ENCODE measurements at regions of chr3 and their contacts with region 1.

Region 1: GRCh38 chr3:105868742-105869530 is at the start of gene CBLB:
- DNase-seq: peak; percentile 96 to 97
- H3K4me3 ChIP-seq: peak within 1 kb of the TSS; percentile 80 to 88
- H3K27ac ChIP-seq: peak within 1 kb of the TSS; percentile 95 to 96
- H3K4me1 ChIP-seq: peaks cover 0 to 45% (median 20%) of the 10 kb centered on the region in 4 donors
- H3K27me3 ChIP-seq: no peaks in the 10 kb centered on the region
- CTCF ChIP-seq: peak in 1 of 2 experiments; percentile 31

Region 2: DNA sequence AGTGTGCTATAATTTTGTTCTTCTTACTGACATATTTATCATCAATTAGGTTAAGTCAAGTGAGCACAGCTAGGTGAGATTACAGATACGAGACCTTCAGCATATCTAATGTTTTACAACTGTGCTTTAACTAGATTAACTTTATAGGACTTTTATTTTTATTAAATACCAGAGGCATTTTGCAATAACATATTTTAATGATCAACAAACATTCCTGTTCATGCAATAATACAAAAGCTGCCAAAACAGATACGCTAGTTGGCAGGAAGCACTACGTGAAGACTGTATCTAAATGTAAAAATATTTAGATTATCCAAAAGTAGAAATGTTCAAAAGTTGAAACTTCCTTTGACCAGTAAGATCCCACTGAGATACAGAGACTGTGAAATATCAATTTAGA is 139.3 kb before region 1 on chr3:
- intact Hi-C with region 1: loop called (anchors 10 kb)
- DNase-seq: no peak
- H3K4me3 ChIP-seq: no peak overlapping the region
- H3K27ac ChIP-seq: no peak overlapping the region
- H3K4me1 ChIP-seq: peaks cover 0 to 30% (median 13%) of the 10 kb centered on the region in 4 donors
- H3K27me3 ChIP-seq: no peaks in the 10 kb centered on the region
- CTCF ChIP-seq: no peak

Region 3: DNA sequence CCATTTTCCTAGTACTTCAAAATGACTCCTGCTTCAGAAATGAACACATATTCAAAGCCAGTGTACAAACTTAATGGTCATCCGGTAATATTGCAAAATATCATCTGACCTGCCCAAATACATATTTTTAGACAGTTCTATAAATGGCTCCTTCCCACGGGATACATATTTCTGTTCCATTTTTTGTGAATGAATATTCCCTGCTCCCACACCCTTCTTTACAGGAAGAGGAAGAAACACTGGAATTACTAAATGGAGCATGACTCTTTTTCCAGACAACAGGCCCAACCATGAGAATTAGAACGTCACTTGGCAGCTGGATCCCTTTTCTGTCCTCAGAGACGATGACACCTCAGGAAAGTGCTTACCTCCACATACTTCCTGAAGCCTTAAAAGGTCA is 37.9 kb after region 1 on chr3:
- intact Hi-C with region 1: loop called (anchors 5 kb)
- DNase-seq: peak in 1 of 2 donors; percentile 72
- H3K4me3 ChIP-seq: no peak overlapping the region
- H3K27ac ChIP-seq: peak overlapping the region; percentile 70 to 73
- H3K4me1 ChIP-seq: peaks cover 0 to 40% (median 20%) of the 10 kb centered on the region in 4 donors
- H3K27me3 ChIP-seq: no peaks in the 10 kb centered on the region
- CTCF ChIP-seq: no peak